Dendritic cell treated with granulocyte-macrophage colony-stimulating factor and Interleukin-4, amounts not matched to agents 40 ng/mL and 50 ng/mL, for 4 days (primary cell): ENCODE measurements at regions of chr18 and their contacts with region 1.

Region 1: GRCh38 chr18:79988451-79989194 is at the start of gene TXNL4A:
- H3K4me3 Mint-ChIP-seq: peak within 1 kb of the TSS; percentile 90
- H3K27ac Mint-ChIP-seq: peak within 1 kb of the TSS; percentile 95
- H3K4me1 Mint-ChIP-seq: peaks cover 36% of the 10 kb centered on the region
- H3K27me3 Mint-ChIP-seq: no peaks in the 10 kb centered on the region

Region 2: DNA sequence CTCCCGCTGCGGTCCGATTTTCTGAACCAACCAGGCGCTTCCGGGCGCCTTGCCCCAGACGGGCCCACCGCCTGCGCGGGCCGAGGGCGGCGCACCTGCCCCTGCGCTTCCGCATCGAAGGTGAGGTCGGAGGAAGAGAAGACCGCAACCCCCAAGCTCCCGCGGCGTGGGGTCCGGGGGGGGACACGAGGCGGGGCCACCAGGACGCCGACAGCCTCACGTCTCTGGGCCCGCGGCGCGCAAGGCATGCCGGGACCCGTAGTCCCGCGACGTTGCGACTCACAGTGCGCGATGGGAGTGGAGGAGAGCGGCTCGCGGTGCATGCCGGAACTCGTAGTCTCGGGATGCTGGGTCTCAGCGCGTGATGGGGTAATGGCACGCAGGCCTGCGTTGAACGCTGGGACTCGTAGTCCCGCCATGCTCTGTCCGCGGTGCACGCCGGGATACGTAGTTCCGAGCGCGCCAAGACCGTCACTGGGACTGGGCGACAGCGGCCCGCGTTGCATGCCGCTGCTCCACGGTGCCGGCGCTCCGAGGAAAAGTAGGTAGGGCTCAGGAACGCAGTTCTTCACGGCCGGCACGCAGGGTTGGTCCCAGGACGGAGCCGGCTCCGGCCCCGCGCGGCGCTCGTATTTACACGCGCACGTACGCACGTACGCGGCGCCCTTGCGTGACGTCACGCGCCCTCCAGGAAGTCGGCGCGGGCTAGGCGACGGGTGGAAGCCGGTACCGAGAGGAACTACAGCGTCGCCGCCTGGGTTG is 309.3 kb before region 1 on chr18 and contains the start of gene CTDP1:
- intact Hi-C with region 1: loop called (anchors 1 kb)
- H3K4me3 Mint-ChIP-seq: peak within 1 kb of the TSS; percentile 90
- H3K27ac Mint-ChIP-seq: peak within 1 kb of the TSS; percentile 97
- H3K4me1 Mint-ChIP-seq: peaks cover 46% of the 10 kb centered on the region
- H3K27me3 Mint-ChIP-seq: no peaks in the 10 kb centered on the region

Region 3: DNA sequence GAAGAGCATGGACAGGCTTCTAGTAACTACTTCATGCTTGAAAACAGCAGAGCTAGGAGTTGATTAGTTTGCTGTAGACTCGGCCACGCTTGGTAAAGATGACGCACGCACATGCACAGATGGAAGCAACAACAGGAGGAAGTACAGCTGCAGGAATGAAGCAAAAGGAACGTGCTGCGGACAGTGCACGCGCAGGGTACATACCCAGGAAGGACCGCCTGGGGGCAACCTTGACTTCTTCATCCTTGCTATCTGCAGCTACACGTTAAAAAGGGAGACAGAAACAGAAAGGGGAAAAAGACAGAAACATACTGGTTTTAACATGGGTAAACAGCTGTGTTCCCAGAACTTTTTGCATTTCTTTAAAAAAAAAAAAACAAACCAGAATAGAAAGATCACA is 54.9 kb before region 1 on chr18:
- intact Hi-C with region 1: loop called (anchors 10 kb)
- H3K4me3 Mint-ChIP-seq: peak overlapping the region; percentile 56
- H3K27ac Mint-ChIP-seq: peak overlapping the region; percentile 86
- H3K4me1 Mint-ChIP-seq: peaks cover 70% of the 10 kb centered on the region
- H3K27me3 Mint-ChIP-seq: no peaks in the 10 kb centered on the region

Region 4: DNA sequence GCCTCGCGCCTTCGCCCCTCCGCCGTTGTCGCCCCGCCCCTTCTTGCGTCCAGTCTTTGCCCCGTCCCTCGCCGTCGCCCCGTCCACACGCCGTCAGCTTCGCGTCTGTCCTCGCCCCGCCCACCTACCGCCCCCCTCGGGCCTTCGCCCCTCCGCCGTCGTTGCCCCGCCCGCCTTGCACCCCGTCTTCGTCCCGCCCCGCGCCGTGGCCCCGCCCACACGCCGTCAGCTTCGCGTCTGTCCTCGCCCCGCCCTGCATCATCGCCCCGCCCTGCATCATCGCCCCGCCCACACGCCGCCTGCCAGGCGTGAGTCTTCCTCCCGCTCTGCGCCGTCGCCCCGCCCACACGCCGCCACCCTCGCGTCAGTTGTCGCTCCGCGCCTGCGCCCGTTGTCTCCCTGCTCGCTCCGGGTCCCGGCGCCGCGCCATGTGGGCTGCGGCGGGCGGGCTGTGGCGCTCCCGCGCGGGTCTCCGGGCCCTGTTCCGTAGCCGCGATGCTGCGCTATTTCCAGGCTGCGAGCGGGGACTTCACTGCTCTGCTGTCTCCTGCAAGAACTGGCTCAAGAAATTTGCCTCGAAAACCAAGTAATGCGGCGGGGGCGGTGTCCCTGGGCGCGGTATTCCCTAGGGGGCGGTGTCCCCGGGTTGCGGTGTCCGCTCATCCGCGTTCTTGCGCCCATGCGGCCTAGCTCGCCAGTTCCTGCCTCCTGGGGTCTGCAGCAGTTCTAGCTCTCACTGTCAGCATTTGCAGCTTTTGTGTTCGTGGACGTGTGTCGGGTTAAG is 45.6 kb after region 1 on chr18 and contains the start of gene RBFA:
- intact Hi-C with region 1: loop called (anchors 1 kb)
- H3K4me3 Mint-ChIP-seq: peak within 1 kb of the TSS; percentile 82
- H3K27ac Mint-ChIP-seq: peak within 1 kb of the TSS; percentile 95
- H3K4me1 Mint-ChIP-seq: peaks cover 27% of the 10 kb centered on the region
- H3K27me3 Mint-ChIP-seq: peaks cover 1% of the 10 kb centered on the region

Region 5: GRCh38 chr18:80147418-80148325 is 159.0 kb after region 1 on chr18:
- intact Hi-C with region 1: loop called (anchors 1 kb)
- H3K4me3 Mint-ChIP-seq: peak overlapping the region; percentile 81
- H3K27ac Mint-ChIP-seq: peak overlapping the region; percentile 86
- H3K4me1 Mint-ChIP-seq: peaks cover 21% of the 10 kb centered on the region
- H3K27me3 Mint-ChIP-seq: peaks cover 5% of the 10 kb centered on the region